ENCODE measurements at regions of chr14 and their contacts with region 1.

Region 1: DNA sequence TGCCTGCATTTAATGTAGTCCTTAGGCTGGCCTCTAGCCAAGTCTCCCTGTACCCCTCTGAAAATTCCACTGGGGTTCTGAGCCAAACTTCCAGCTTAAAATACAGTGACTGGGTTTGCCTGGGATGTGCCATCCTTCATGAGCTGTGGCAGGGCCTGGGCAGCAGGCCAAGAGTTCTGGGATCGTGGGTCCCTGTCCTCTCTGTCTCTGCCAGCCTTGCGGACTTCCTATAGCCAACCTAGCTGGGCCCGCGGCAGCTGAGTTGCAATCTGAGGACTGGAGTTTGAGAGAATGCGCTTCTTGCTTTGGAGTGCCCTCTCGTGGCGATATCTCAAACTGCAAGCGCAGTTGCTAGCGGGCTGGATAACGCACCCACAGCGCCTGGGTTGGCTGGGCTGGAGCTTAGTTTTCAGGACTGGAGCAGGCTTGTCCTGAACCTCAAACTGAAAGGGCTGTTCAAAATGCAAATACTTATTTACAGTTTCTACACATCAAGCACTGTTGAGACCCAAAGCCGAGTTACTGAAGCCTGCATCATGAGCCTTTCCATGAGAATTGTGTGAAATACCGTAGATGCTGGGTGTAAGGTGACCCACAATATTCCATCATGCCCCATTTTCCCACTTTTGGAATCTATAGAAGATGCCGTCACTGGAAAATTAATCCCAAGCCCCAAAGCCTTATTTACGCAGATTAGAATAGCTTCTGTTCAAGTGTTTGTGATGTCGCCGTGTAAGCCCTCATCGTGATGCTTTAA is 7.3 kb upstream of the IFI27L2 start:
- DNase-seq: peak; percentile 74 to 90 (median 85)
- ATAC-seq: peak; percentile 97
- H3K4me3 ChIP-seq: no peak overlapping the region
- H3K4me3 Mint-ChIP-seq: no peak overlapping the region
- H3K27ac ChIP-seq: no peak overlapping the region
- H3K27ac Mint-ChIP-seq: no peak overlapping the region
- H3K4me1 ChIP-seq: no peaks in the 10 kb centered on the region
- H3K4me1 Mint-ChIP-seq: no peaks in the 10 kb centered on the region
- H3K27me3 ChIP-seq: no peaks in the 10 kb centered on the region
- H3K27me3 Mint-ChIP-seq: peaks cover 5% of the 10 kb centered on the region
- CTCF ChIP-seq: peak; percentile 97

Region 2: DNA sequence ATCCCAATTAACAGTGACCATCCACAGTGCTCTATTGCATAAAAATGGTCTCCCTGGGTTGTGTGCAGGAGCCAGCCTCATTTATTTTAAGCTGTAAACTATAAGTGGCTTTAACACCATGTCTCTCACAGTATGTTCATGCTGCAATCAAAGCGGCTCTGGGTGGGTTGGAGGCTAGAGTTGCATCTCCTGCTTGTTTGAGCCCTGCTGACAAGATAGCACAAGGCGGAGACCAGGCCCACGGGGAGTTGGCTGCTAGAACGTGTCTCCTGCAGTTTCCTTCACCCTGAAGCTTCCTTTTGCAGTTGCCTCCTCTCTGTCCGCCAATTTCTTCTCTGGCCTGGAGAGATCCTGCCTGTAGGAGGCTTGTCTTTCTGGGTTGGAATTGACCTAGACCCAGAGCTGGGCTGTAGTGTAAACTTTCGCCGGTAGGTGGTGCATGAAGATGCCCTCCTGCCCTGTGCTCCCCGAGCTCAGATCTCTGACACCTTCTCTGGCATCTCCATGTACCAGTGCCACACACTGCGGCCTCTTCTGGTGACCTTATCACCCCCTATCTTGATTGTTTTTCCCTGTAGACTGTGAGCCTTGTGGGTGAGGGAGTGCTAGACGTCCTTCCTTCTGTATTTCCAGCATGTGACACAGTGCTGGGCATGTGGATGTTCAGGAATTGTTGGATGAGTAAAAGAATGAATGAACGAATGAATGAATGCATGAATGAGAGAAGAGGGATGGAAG is 100.3 kb before region 1 on chr14:
- CTCF ChIA-PET with region 1: interaction called, 184 read pairs
- POLR2A ChIA-PET with region 1: interaction called, 7 read pairs
- intact Hi-C with region 1: loop called (anchors 1 kb)
- DNase-seq: peak; percentile 52 to 84 (median 78)
- ATAC-seq: peak; percentile 99
- H3K4me3 ChIP-seq: no peak overlapping the region
- H3K4me3 Mint-ChIP-seq: no peak overlapping the region
- H3K27ac ChIP-seq: no peak overlapping the region
- H3K27ac Mint-ChIP-seq: no peak overlapping the region
- H3K4me1 ChIP-seq: no peaks in the 10 kb centered on the region
- H3K4me1 Mint-ChIP-seq: peaks cover 3% of the 10 kb centered on the region
- H3K27me3 ChIP-seq: no peaks in the 10 kb centered on the region
- H3K27me3 Mint-ChIP-seq: no peaks in the 10 kb centered on the region
- CTCF ChIP-seq: peak; percentile 82

Region 3: GRCh38 chr14:94051115-94051514 is 85.6 kb before region 1 on chr14:
- CTCF ChIA-PET with region 1: interaction called, 15 read pairs
- POLR2A ChIA-PET with region 1: no interaction called
- intact Hi-C with region 1: no loop called
- DNase-seq: peak in 2 of 9 experiments; percentile 5 to 6
- ATAC-seq: no peak
- H3K4me3 ChIP-seq: no peak overlapping the region
- H3K4me3 Mint-ChIP-seq: no peak overlapping the region
- H3K27ac ChIP-seq: no peak overlapping the region
- H3K27ac Mint-ChIP-seq: no peak overlapping the region
- H3K4me1 ChIP-seq: no peaks in the 10 kb centered on the region
- H3K4me1 Mint-ChIP-seq: peaks cover 15% of the 10 kb centered on the region
- H3K27me3 ChIP-seq: no peaks in the 10 kb centered on the region
- H3K27me3 Mint-ChIP-seq: no peaks in the 10 kb centered on the region
- CTCF ChIP-seq: no peak

Region 4: DNA sequence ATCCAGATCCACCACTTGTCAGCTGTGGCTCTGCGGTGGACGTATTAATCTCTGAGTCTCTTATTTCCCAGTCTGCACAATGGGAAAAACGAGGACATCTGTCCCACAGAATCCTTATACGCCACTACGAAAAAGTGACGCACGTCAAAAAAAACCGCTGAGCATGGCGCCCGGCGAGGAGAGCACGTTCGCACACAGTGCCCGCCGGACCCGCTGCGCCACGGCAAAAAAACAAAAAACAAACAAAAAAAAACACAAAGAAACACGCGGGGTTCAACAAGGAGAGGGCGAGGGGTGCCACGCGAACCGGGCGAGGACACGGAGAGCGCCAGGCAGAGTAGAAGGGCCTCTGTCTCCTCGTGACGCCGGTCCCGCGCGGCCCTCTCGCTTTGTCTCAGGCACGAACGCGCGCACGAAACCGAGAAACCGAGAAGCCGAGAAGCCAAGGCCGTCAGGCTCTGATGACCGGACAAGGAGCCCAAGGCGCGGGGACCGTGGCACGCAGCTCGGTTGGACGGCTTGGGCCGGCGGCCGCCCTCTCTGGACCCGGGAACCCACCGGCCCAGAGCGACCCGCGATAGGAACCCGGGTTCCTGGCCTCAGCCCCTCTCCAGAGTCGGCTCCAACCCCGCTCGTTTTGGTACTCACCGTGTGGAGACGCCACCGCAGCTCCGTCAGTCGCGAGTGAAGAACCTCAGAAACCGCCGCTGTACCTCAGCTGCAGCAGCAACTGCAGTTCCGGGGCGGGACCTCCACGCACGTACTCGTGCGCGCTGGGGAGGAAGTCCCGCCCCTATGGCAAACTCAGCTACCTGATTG is 56.1 kb before region 1 on chr14 and contains the start of gene DDX24:
- CTCF ChIA-PET with region 1: interaction called, 20 read pairs
- POLR2A ChIA-PET with region 1: interaction called, 4 read pairs
- intact Hi-C with region 1: loop called in 1 of 2 experiments (anchors 2 kb)
- DNase-seq: peak; percentile 94 to 99 (median 96)
- ATAC-seq: peak; percentile 93
- H3K4me3 ChIP-seq: peak within 1 kb of the TSS; percentile 72 to 87
- H3K4me3 Mint-ChIP-seq: peak within 1 kb of the TSS; percentile 99
- H3K27ac ChIP-seq: peak within 1 kb of the TSS; percentile 92 to 98
- H3K27ac Mint-ChIP-seq: peak within 1 kb of the TSS; percentile 99
- H3K4me1 ChIP-seq: peaks cover 38% of the 10 kb centered on the region
- H3K4me1 Mint-ChIP-seq: peaks cover 48% of the 10 kb centered on the region
- H3K27me3 ChIP-seq: no peaks in the 10 kb centered on the region
- H3K27me3 Mint-ChIP-seq: no peaks in the 10 kb centered on the region
- CTCF ChIP-seq: no peak
- total RNA-seq, gene DDX24: 769 to 779 TPM

Region 5: DNA sequence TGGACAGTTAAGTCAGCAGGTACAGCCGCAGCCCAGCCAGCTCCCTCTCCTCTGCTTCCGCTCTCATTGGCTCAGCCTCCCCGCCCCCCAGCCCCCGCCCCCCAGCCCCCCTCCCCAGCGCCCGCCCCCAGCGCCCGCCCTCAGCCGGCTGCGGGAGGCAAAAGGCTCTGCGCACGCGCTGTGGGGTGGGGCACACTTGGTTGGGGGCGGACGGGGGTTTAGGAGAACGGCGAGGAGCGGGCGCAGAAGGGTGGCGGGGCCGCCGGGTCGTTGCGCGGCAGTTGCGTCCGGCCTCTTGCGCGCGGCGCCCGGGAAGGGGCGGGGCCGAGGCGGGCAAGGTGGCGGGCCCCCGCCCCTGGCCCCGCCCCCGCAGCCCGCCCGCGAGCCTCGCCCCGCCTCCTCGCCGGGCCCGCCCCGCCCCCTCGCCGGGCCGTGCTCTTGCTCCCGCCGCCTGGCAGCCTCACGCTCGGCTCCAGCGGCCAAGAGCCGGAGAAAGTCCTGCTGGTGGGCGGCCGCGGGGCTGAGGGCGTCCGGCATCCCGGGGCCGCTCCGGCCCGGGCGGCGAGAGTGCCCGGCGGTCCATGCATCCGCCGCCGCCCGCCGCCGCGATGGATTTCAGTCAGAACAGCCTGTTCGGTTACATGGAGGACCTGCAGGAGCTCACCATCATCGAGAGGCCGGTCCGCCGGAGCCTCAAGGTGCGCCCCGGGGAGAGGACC is 37.3 kb after region 1 on chr14 and contains the start of gene PPP4R4:
- CTCF ChIA-PET with region 1: interaction called, 48 read pairs
- POLR2A ChIA-PET with region 1: no interaction called
- intact Hi-C with region 1: loop called in 1 of 2 experiments (anchors 1 kb)
- DNase-seq: peak; percentile 66 to 93 (median 84)
- ATAC-seq: peak; percentile 89
- H3K4me3 ChIP-seq: peak within 1 kb of the TSS; percentile 62 to 77
- H3K4me3 Mint-ChIP-seq: peak within 1 kb of the TSS; percentile 84
- H3K27ac ChIP-seq: no peak within 1 kb of the TSS
- H3K27ac Mint-ChIP-seq: no peak within 1 kb of the TSS
- H3K4me1 ChIP-seq: peaks cover 12% of the 10 kb centered on the region
- H3K4me1 Mint-ChIP-seq: peaks cover 18% of the 10 kb centered on the region
- H3K27me3 ChIP-seq: peaks cover 0 to 8% of the 10 kb centered on the region in 2 experiments
- H3K27me3 Mint-ChIP-seq: peaks cover 16% of the 10 kb centered on the region
- CTCF ChIP-seq: no peak
- total RNA-seq, gene PPP4R4: not detected

Region 6: DNA sequence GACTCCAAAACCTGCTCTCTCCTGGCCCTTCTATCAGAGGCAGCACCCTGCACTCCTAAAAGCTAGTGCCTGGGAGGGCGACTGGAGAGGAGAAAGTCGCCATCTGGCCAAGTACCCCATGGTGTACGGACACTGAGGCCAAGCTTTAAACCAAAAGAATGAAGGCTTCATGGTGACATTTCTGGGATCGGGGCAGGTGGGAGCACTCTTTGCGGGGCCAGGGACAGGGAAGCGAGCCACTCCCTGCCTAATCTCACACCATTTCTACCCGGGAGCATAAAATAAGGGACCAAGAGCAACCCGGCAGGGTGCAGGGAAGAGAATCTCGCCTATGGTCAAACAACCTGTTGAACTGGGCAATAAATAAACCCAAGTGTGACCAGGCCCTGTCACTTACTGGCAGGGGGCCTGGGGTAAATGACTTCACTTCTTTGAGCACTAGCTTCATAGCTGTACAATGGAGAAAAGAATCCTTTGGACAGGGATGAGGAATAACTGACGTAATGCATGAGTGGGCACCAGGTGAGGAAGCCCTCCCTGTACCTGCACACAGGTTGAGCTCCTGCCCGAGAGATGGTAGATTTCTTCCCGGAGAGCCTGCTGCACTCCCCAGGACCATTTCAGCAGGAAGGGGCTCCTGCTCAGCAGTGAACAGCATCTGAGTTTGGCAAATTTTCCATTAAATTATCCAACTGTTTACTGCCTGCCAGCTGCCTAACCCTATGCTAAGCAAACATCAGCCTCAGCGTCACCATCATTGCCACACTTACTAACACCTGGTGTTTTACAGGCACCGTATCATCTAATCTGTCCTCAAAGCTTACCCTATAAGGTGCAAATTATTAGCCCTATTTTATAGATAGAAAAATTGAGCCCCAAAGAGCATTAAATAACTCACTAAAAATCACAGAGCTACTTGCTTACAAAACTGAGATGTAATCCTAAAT is 249.6 kb after region 1 on chr14:
- CTCF ChIA-PET with region 1: no interaction called
- POLR2A ChIA-PET with region 1: no interaction called
- intact Hi-C with region 1: no loop called
- DNase-seq: no peak
- ATAC-seq: no peak
- H3K4me3 ChIP-seq: no peak overlapping the region
- H3K4me3 Mint-ChIP-seq: no peak overlapping the region
- H3K27ac ChIP-seq: no peak overlapping the region
- H3K27ac Mint-ChIP-seq: no peak overlapping the region
- H3K4me1 ChIP-seq: no peaks in the 10 kb centered on the region
- H3K4me1 Mint-ChIP-seq: no peaks in the 10 kb centered on the region
- H3K27me3 ChIP-seq: no peaks in the 10 kb centered on the region
- H3K27me3 Mint-ChIP-seq: no peaks in the 10 kb centered on the region
- CTCF ChIP-seq: no peak

Region 7: DNA sequence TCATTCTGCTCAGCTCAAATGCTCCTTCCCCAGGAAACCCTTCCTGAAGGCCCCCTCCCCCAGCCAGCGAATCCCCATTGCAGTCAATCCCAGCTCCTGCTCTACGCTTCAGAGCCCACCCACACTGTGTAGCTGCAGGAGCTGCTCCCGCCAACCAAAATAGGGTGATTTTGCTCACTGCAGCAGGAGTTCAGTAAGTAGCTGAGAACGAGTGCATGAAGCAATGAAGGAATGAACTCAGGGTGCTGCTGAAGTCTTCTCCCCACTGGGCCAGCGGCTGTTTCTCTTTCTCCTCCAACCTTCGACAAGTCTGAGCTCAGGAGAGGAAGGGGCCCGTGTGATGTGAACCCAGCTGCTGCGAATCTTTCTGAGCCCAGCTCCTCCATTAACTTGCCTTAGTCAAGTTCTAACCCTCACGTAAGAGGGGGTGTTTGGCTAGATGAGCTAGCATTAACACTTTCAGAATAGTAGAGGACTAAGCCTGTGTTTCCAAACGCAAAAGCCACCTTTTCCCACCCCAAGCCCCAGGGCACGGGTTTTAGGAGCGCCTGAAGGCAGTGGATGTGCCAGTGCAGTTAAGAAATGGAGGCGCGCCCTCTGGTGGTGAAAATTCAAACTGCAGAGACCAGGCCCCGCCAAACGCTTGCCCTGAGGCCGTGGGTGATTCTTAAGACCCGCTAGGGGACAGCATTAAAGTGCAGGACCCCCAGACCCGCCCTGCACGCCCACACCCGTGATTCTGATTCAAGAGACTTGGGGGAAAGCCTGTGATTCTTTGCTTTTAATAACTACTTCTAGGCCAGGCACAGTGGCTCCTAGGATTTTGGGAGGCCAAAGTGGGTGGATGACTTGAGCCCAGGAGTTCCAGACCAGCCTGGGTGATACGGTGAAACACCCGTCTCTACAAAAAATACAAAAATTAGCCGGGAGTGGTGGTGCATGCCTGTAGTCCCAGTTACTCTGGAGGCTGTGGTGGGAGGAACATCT is 412.5 kb after region 1 on chr14:
- CTCF ChIA-PET with region 1: no interaction called
- POLR2A ChIA-PET with region 1: no interaction called
- intact Hi-C with region 1: loop called (anchors 5 to 10 kb)
- DNase-seq: peak in 8 of 9 experiments; percentile 7 to 60 (median 44)
- ATAC-seq: no peak
- H3K4me3 ChIP-seq: no peak overlapping the region
- H3K4me3 Mint-ChIP-seq: no peak overlapping the region
- H3K27ac ChIP-seq: no peak overlapping the region
- H3K27ac Mint-ChIP-seq: no peak overlapping the region
- H3K4me1 ChIP-seq: no peaks in the 10 kb centered on the region
- H3K4me1 Mint-ChIP-seq: no peaks in the 10 kb centered on the region
- H3K27me3 ChIP-seq: no peaks in the 10 kb centered on the region
- H3K27me3 Mint-ChIP-seq: peaks cover 22% of the 10 kb centered on the region
- CTCF ChIP-seq: peak; percentile 60

Measured in CD8-positive, alpha-beta T cell (primary cell).